Activated CD8-positive, alpha-beta T cell treated with anti-CD3 and anti-CD28 coated beads, Interleukin-2, amount 10 ng/mL, durations not matched to agents 7 days and 5 days (primary cell): ENCODE measurements at regions of chr19 and their contacts with region 1.

Region 1: GRCh38 chr19:56350416-56351045 is 35.9 kb upstream of the ZSCAN5A start:
- DNase-seq: peak; percentile 70
- ATAC-seq: no peak
- H3K4me3 Mint-ChIP-seq: no peak overlapping the region
- H3K27ac Mint-ChIP-seq: no peak overlapping the region
- H3K4me1 Mint-ChIP-seq: no peaks in the 10 kb centered on the region
- H3K27me3 Mint-ChIP-seq: no peaks in the 10 kb centered on the region

Region 2: DNA sequence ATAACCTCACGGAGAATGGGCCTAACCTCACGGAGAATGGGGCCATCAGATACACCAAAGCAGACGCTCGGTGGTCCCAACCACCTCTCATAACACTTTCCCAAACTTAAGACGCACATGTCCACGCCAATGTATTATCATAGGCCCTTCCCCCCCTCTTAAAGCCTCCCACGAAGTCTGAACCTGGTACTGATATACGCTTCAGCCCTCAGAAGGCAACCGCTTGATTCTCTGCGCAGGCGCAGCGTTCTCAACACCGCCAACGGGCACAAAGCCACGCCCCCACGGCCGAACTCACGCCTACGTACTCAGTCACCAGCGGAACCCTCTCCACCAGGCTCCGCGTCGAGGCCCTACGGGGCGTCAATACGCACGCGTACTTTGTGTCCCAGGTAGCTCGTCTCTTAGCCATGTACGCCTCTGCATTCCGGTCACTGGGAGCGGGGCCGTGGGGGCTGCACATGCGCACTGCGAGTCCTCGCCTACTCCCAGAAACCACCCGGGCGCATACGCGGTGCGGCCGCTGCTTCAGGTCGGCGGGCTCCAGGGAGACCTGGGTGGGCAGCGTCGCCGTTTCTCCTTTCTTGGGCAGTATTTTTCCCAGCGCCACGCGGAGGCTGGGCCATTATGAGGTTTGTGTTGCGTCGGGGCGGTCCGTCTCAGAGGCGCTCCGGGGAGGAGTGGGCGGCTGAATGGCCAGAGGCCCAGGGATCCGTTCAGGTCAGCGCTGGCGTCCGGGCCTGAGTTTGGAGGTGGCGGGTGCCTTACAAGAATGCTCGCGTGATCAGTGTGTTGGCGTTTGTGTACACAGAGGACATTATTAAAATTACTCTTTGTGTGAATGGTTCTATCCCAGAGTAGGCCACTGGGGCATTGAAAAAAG is 17.5 kb after region 1 on chr19:
- CTCF ChIA-PET with region 1: interaction called, 12 read pairs
- POLR2A ChIA-PET with region 1: no interaction called
- DNase-seq: peak; percentile 91
- ATAC-seq: peak; percentile 99
- H3K4me3 Mint-ChIP-seq: peak overlapping the region; percentile 91
- H3K27ac Mint-ChIP-seq: peak overlapping the region; percentile 89
- H3K4me1 Mint-ChIP-seq: peaks cover 24% of the 10 kb centered on the region
- H3K27me3 Mint-ChIP-seq: no peaks in the 10 kb centered on the region